MCF 10A (cell line): ENCODE measurements at regions of chr22 and their contacts with region 1.

Region 1: DNA sequence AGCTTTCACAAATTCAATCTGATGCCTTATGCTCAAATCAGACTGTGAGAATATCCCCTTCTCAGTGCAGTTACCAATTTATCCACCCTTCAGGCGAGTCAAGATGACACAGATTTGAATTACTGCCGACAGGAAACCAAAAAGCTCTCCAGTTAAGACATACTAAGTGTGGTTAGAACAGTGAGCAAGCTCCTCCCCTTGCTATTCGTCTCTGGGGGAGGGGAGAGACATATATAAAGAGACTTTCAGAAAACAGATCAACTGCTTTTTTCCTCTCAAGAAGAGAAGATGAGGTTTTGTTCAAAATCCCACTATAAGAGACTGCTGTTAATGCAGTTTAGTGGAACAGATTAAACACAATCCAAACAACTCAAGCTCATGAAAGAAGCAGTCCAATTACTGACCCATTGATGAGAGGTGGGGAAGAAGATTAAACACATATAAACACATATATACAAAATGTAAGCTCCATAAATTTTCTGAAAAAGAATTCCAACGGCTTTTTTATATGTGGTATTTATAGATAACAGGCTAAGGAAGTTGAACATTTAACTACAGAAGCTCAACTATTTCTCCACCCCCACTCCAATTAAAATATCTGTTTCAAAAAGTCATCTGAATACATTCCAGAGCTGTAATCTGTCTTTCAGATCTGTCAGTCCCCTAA is 102.7 kb downstream of the MRTFA start:
- DNase-seq: peak; percentile 87
- H3K4me3 Mint-ChIP-seq: peak overlapping the region; percentile 68
- H3K27ac Mint-ChIP-seq: peak overlapping the region; percentile 24
- H3K4me1 Mint-ChIP-seq: peaks cover 36% of the 10 kb centered on the region
- H3K27me3 Mint-ChIP-seq: no peaks in the 10 kb centered on the region
- CTCF ChIP-seq: no peak

Region 2: DNA sequence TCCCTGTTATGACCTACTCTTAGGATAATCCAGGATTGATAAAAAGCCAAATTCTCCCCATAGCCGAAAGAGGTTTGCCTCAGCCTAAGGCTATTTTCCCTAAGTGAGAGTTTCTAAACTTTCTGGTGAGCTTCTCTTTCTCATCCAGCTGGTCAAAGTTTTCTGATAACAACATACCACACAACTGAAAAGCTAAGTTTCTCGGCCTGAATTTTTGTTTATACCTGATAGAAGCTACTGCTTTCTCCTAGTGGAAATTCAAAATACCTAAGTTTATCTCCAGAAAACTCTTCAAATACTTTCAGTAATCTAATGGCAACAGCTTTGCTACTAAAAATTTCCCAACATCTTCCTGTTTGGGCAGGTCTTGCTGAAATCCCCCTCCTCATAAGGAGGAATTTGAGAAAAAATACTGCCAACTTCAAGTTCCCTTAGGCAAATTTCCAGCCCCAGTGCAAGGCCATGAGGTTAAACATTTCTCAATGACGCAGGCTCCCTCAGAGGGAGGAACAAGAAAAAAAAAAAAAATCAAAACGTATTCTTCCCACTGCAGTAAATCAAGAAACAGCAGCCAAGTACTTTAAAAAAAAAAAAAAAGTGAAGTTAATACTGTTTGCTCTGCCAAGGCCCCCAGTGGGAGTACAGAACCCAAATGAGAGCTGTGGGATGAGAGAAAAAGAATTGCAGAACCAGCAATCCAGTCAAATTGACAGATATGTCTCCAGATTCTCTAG is 24.3 kb before region 1 on chr22:
- CTCF ChIA-PET with region 1: interaction called, 6 read pairs
- POLR2A ChIA-PET with region 1: interaction called, 22 read pairs
- intact Hi-C with region 1: no loop called
- DNase-seq: peak; percentile 97
- H3K4me3 Mint-ChIP-seq: peak overlapping the region; percentile 31
- H3K27ac Mint-ChIP-seq: peak overlapping the region; percentile 85
- H3K4me1 Mint-ChIP-seq: peaks cover 44% of the 10 kb centered on the region
- H3K27me3 Mint-ChIP-seq: no peaks in the 10 kb centered on the region
- CTCF ChIP-seq: no peak

Region 3: GRCh38 chr22:40583053-40583741 is 49.4 kb after region 1 on chr22:
- CTCF ChIA-PET with region 1: no interaction called
- POLR2A ChIA-PET with region 1: interaction called, 11 read pairs
- intact Hi-C with region 1: no loop called
- DNase-seq: no peak
- H3K4me3 Mint-ChIP-seq: no peak overlapping the region
- H3K27ac Mint-ChIP-seq: no peak overlapping the region
- H3K4me1 Mint-ChIP-seq: peaks cover 9% of the 10 kb centered on the region
- H3K27me3 Mint-ChIP-seq: no peaks in the 10 kb centered on the region
- CTCF ChIP-seq: no peak

Region 4: GRCh38 chr22:40597526-40598430 is 63.9 kb after region 1 on chr22:
- CTCF ChIA-PET with region 1: interaction called, 5 read pairs
- POLR2A ChIA-PET with region 1: interaction called, 28 read pairs
- intact Hi-C with region 1: no loop called
- DNase-seq: no peak
- H3K4me3 Mint-ChIP-seq: peak overlapping the region; percentile 45
- H3K27ac Mint-ChIP-seq: peak overlapping the region; percentile 35
- H3K4me1 Mint-ChIP-seq: peaks cover 41% of the 10 kb centered on the region
- H3K27me3 Mint-ChIP-seq: no peaks in the 10 kb centered on the region
- CTCF ChIP-seq: no peak

Region 5: GRCh38 chr22:40636380-40637182 is 102.7 kb after region 1 on chr22 and contains the start of gene MRTFA:
- CTCF ChIA-PET with region 1: interaction called, 4 read pairs
- POLR2A ChIA-PET with region 1: interaction called, 21 read pairs
- intact Hi-C with region 1: no loop called
- DNase-seq: peak; percentile 99
- H3K4me3 Mint-ChIP-seq: peak within 1 kb of the TSS; percentile 88
- H3K27ac Mint-ChIP-seq: peak within 1 kb of the TSS; percentile 94
- H3K4me1 Mint-ChIP-seq: peaks cover 28% of the 10 kb centered on the region
- H3K27me3 Mint-ChIP-seq: no peaks in the 10 kb centered on the region
- CTCF ChIP-seq: no peak
- total RNA-seq, gene MRTFA: 47.2 and 52.7 TPM in 2 replicates